ENCODE measurements at regions of chr6 and their contacts with region 1.

Region 1: DNA sequence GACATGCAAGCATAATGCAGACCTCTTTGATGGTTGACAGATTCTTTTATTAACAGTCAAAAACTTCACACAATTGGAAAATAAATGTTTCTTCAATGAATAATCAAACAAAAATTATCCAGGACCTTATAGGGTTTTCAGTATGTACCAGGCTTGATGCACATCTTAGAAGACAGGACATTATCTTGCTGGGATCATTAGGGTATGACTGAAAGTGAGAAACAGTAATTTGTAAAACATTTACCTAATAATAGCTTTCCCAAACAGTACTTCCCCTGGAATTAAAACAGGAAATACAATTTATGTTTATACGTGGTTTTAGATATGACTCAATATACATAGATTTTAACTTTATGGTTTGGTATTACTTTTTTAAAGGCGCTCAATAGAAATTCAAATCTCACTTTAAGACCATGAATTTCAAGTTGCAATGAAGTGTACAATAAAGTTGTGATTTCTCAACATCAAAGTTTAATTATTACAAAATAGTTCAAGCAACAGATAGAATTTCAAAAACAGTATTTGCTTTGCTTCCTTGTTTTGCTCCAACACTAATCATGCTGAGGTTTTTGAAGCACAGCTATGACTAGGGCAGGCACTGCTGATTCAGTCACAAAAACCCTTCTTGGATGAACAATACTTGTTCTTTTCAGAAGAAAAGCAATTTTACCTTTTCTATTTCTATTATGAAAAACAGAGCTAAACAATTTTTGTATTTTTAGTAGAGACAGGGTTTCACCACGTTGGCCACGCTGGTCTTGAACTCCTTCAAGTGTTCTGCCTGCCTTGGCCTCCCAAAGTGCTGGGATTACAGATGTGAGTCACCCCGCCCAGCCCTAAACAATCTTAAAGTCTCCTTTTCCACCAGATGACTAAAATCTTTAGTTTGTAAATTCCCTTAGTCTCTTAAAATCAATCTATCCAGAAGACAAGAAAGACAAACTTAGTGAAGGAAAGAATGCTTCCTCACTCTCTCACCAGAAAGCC is 13.7 kb downstream of the SOD2 start:
- DNase-seq: no peak
- H3K4me3 ChIP-seq: no peak overlapping the region
- H3K27ac ChIP-seq: peak overlapping the region in 1 of 5 donors; percentile 13
- H3K4me1 ChIP-seq: peaks cover 0 to 17% of the 10 kb centered on the region in 2 donors
- H3K27me3 ChIP-seq: no peaks in the 10 kb centered on the region
- CTCF ChIP-seq: no peak
- POLR2A ChIP-seq: no peak

Region 2: GRCh38 chr6:159422041-159422984 is 257.1 kb before region 1 on chr6:
- intact Hi-C with region 1: no loop called
- DNase-seq: peak in 2 of 7 donors; percentile 4 to 51
- H3K4me3 ChIP-seq: no peak overlapping the region
- H3K27ac ChIP-seq: peak overlapping the region in 1 of 5 donors; percentile 1
- H3K4me1 ChIP-seq: no peaks in the 10 kb centered on the region
- H3K27me3 ChIP-seq: no peaks in the 10 kb centered on the region
- CTCF ChIP-seq: no peak
- POLR2A ChIP-seq: no peak

Region 3: DNA sequence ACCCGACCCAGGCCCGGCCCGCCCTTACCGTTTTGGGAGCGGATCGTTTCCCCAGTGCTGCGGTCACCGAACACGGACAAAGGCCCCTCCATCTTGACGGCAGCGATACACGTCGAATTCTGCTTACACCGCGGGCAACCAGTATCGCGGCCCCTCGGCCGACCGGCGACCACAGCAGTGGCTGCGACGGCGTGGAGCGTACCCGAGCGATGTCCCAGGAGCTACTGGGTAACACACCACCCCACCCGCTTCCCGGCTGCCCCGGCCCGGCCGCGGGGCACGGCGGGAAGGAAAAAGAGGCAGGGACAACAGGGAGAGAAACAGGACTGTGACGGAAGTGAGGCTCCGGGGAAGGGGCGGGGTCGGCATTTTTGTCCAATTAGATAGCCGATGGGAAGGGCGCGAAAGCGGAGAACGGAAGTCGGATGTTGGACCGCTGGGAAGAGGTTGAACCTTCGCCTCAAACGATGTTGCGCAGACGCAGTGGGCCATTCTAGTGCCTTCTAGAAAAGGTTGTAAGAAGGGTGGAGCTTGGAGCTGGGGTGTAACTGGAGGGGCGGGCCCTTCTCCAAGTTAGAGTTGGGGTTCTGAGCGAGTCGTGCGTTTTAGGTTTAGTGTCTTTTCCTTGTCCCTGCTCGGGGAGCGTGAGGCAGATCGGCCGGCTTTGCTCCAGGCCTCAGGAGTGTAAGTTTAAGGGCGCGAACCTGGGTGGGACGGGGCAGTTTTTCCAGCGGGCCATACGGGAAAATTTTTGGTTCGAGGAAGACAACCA is 110.2 kb after region 1 on chr6 and contains the start of gene TCP1:
- intact Hi-C with region 1: loop called in 1 of 2 experiments (anchors 10 kb)
- DNase-seq: peak; percentile 99 to 100 (median 100)
- H3K4me3 ChIP-seq: peak within 1 kb of the TSS; percentile 59 to 89 (median 76)
- H3K27ac ChIP-seq: peak within 1 kb of the TSS; percentile 85 to 98 (median 92)
- H3K4me1 ChIP-seq: peaks cover 19 to 43% of the 10 kb centered on the region in 2 donors
- H3K27me3 ChIP-seq: no peaks in the 10 kb centered on the region
- CTCF ChIP-seq: no peak
- POLR2A ChIP-seq: peak; percentile 91 to 97
- total RNA-seq, gene TCP1: 81.9 to 290 (median 124) TPM

Region 4: DNA sequence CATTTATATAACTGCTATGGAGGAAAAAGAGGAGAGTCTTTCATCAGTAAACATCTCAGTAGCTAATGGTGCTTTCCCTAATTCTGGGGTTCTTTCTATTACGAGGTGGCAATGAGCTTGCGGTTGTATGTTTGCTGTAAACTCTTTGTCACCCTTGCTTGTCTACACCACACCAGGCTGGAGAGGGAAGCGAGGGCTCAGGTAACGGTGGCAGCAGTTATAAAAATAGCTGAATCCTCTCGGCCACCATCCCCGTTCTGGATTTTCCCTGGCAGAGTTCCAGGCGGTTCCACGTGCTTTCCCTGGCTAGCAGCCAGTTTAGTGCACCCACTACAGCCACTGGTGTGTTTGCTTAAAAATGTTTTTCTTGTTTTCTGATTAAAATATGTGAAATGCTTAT is 250.4 kb after region 1 on chr6:
- intact Hi-C with region 1: loop called in 1 of 2 experiments (anchors 10 kb)
- DNase-seq: peak in 3 of 7 donors; percentile 15 to 59 (median 56)
- H3K4me3 ChIP-seq: no peak overlapping the region
- H3K27ac ChIP-seq: no peak overlapping the region
- H3K4me1 ChIP-seq: peaks cover 0 to 7% of the 10 kb centered on the region in 2 donors
- H3K27me3 ChIP-seq: no peaks in the 10 kb centered on the region
- CTCF ChIP-seq: no peak
- POLR2A ChIP-seq: no peak

Measured in adrenal gland (tissue), 19 donors.